ENCODE measurements at regions of chr18 and their contacts with region 1.

Region 1: GRCh38 chr18:10787293-10787901 is 261.6 kb downstream of the NAPG start:
- DNase-seq: peak in 1 of 2 experiments; percentile 88
- H3K4me3 ChIP-seq: no peak overlapping the region
- H3K27ac ChIP-seq: no peak overlapping the region
- H3K4me1 ChIP-seq: no peaks in the 10 kb centered on the region
- H3K27me3 ChIP-seq: peaks cover 0 to 1% (median 0%) of the 10 kb centered on the region in 4 experiments; a peak in 1 of 7 replicates
- CTCF ChIP-seq: peak; percentile 49 to 84 (median 69)
- EP300 ChIP-seq: no peak
- POLR2A ChIP-seq: no peak
- RAD21 ChIP-seq: peak; percentile 70 to 81

Region 2: DNA sequence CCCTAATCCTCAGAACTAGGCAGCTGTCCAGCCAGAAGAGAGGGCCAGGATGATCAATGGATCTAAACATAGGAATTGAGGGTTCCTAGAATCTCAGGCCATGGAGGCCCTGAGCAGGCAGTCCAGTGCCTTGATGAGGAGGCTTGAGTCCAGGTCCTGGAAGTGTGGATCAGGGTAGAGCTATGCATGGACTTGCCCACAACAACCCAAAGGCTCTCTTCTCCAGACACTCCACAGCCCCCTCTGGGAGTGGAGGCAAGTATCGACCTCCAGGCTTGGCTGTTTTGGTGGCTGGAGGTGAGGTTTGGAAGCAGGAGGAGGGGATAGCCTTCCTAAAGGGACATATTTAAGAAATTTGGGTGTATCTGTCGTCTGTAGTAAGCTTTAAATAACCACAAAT is 215.9 kb before region 1 on chr18:
- CTCF ChIA-PET with region 1: no interaction called
- POLR2A ChIA-PET with region 1: no interaction called
- DNase-seq: peak in 1 of 2 experiments; percentile 19
- H3K4me3 ChIP-seq: no peak overlapping the region
- H3K27ac ChIP-seq: no peak overlapping the region
- H3K4me1 ChIP-seq: no peaks in the 10 kb centered on the region
- H3K27me3 ChIP-seq: no peaks in the 10 kb centered on the region
- CTCF ChIP-seq: no peak
- EP300 ChIP-seq: no peak
- POLR2A ChIP-seq: no peak
- RAD21 ChIP-seq: no peak

Region 3: GRCh38 chr18:10732990-10733389 is 54.4 kb before region 1 on chr18:
- CTCF ChIA-PET with region 1: interaction called, 10 read pairs
- POLR2A ChIA-PET with region 1: no interaction called
- DNase-seq: no peak
- H3K4me3 ChIP-seq: peak overlapping the region in 1 of 4 experiments; percentile 12; a peak in 1 of 8 replicates
- H3K27ac ChIP-seq: no peak overlapping the region
- H3K4me1 ChIP-seq: no peaks in the 10 kb centered on the region
- H3K27me3 ChIP-seq: no peaks in the 10 kb centered on the region
- CTCF ChIP-seq: no peak
- EP300 ChIP-seq: no peak
- POLR2A ChIP-seq: no peak
- RAD21 ChIP-seq: no peak

Region 4: DNA sequence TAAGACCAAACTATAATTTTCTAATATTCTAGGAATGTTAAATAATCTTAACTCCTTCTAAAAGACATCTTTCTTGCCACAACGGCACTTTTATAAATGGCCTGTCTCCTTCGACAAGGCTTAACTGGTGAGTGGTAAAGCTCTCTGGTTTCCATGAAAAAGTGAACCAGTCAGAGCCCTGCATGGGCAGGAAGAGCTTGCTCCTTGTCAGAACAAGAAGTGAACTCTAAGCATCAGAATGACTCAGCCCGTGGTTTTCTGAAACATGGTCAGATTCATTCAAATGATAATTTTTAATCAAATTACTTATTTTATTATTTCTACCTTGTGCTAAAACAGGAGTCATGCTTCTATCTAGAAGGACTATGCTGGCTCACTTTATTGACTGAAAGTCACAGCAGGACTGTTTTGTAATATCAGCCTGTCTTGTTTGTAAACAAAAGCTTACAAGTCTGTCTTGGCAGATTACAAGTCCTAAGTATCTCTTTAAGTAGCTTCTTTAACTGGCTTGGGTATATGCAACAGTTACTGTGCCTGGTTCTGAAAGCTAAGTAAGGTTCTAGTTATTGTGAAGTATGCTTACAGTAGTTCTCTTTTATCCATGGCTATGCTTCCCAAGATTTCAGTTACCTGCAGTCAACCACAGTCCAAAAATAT is 16.2 kb before region 1 on chr18:
- CTCF ChIA-PET with region 1: interaction called, 21 read pairs
- POLR2A ChIA-PET with region 1: no interaction called
- DNase-seq: no peak
- H3K4me3 ChIP-seq: no peak overlapping the region
- H3K27ac ChIP-seq: no peak overlapping the region
- H3K4me1 ChIP-seq: no peaks in the 10 kb centered on the region
- H3K27me3 ChIP-seq: no peaks in the 10 kb centered on the region
- CTCF ChIP-seq: no peak
- EP300 ChIP-seq: no peak
- POLR2A ChIP-seq: no peak
- RAD21 ChIP-seq: no peak

Region 5: GRCh38 chr18:10798727-10799308 is 11.4 kb after region 1 on chr18:
- CTCF ChIA-PET with region 1: interaction called, 28 read pairs
- POLR2A ChIA-PET with region 1: no interaction called
- DNase-seq: no peak
- H3K4me3 ChIP-seq: no peak overlapping the region
- H3K27ac ChIP-seq: no peak overlapping the region
- H3K4me1 ChIP-seq: peaks cover 0 to 8% (median 4%) of the 10 kb centered on the region in 4 experiments; a peak in 4 of 7 replicates
- H3K27me3 ChIP-seq: no peaks in the 10 kb centered on the region
- CTCF ChIP-seq: no peak
- EP300 ChIP-seq: no peak
- POLR2A ChIP-seq: no peak
- RAD21 ChIP-seq: no peak

Region 6: DNA sequence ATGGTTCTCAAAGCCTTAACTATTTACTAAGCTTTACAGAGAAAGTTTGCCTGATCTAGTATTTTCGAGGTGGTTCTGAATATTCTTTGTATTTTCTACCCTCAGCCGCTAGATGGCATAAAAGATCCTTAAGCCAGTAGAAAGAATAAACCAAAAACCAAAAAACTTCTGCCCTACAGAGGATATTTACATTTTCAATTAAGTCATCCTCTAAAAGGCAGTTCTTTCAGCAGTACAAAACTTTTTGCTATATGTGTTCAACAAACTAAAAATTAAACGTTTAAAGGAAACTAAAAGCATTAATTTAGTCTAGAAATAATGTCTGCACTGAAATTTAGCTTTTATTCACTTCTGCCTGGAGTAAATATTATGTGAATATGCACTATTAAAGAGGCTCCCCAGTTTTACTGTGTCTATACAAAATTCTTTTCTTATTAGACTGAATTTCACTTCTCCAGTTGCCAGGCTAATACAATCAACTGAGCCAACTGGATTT is 64.5 kb after region 1 on chr18:
- CTCF ChIA-PET with region 1: interaction called, 20 read pairs
- POLR2A ChIA-PET with region 1: no interaction called
- DNase-seq: no peak
- H3K4me3 ChIP-seq: no peak overlapping the region
- H3K27ac ChIP-seq: no peak overlapping the region
- H3K4me1 ChIP-seq: peaks cover 0 to 7% (median 3%) of the 10 kb centered on the region in 4 experiments; a peak in 4 of 7 replicates
- H3K27me3 ChIP-seq: no peaks in the 10 kb centered on the region
- CTCF ChIP-seq: peak in 2 of 3 experiments; percentile 52 to 53; a peak in 2 of 4 replicates
- EP300 ChIP-seq: no peak
- POLR2A ChIP-seq: no peak
- RAD21 ChIP-seq: peak; percentile 79 to 85

Region 7: DNA sequence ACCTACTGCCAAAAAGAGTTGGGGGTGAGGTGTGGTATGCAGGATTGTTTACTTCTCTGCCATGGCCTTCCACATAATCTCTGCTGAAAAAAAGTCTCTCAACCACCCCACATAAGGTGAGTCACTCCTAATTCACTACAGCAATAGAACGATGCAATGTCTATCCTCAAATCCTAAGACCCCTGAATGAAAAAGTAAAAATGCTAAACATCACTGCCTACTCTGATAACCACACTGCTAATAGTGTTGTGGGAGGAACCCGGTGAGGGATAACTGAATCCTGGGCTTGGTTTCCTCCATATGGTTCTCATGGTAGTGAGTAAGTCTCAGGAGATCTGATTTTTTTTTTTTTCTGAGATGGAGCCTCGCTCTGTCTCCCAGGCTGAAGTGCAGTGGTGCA is 109.5 kb after region 1 on chr18:
- CTCF ChIA-PET with region 1: no interaction called
- POLR2A ChIA-PET with region 1: no interaction called
- DNase-seq: no peak
- H3K4me3 ChIP-seq: no peak overlapping the region
- H3K27ac ChIP-seq: no peak overlapping the region
- H3K4me1 ChIP-seq: no peaks in the 10 kb centered on the region
- H3K27me3 ChIP-seq: no peaks in the 10 kb centered on the region
- CTCF ChIP-seq: no peak
- EP300 ChIP-seq: no peak
- POLR2A ChIP-seq: no peak
- RAD21 ChIP-seq: no peak

Region 8: GRCh38 chr18:11040823-11041656 is 253.6 kb after region 1 on chr18:
- CTCF ChIA-PET with region 1: interaction called, 12 read pairs
- POLR2A ChIA-PET with region 1: no interaction called
- DNase-seq: peak in 1 of 2 experiments; percentile 58
- H3K4me3 ChIP-seq: no peak overlapping the region
- H3K27ac ChIP-seq: no peak overlapping the region
- H3K4me1 ChIP-seq: peaks cover 0 to 4% (median 0%) of the 10 kb centered on the region in 4 experiments; a peak in 1 of 7 replicates
- H3K27me3 ChIP-seq: no peaks in the 10 kb centered on the region
- CTCF ChIP-seq: peak; percentile 42 to 76 (median 73)
- EP300 ChIP-seq: no peak
- POLR2A ChIP-seq: no peak
- RAD21 ChIP-seq: peak; percentile 80 to 87